Vagina (tissue), 2 donors: ENCODE measurements at regions of chr11 and their contacts with region 1.

Region 1: DNA sequence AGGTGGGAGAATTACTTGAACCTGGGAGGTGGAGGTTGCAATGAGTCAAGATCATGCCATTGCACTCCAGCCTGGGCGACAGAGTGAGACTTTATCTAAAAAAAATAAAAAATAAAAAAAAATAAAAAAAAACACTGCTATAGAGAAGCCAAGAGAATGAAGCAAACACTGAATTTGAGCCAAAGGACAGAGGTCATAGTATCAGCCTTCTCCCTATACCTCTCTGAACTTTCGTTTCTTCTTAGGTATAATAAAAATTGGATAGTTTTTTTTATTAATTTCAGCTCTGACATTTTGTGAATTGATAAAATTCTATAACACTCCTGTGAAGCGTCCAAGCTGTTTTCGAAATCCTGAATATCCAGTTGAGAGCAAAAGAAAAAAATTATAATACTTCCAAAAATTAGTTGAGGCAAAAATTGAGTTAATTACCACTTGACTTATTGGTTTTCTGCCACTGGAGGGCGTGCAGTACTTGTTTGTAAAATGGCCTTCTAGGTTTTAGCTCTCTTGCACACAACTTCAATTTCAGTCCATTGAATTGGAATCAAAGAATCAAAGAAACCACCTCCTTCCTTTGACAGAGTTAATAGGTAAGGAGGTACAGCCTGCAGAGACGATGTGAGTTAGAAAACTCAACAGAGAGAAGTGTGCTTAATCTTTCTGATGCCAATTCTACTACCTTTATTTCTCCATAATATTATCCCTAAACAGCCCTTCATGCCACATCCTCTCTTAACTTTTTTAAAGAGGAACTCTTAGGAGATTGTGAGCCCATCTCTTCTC is 143.2 kb downstream of the BBOX1 start:
- DNase-seq: no peak
- H3K4me3 ChIP-seq: no peak overlapping the region
- H3K27ac ChIP-seq: no peak overlapping the region
- H3K4me1 ChIP-seq: no peaks in the 10 kb centered on the region
- H3K27me3 ChIP-seq: no peaks in the 10 kb centered on the region
- CTCF ChIP-seq: peak; percentile 69 to 93 (median 74)
- POLR2A ChIP-seq: no peak

Region 2: DNA sequence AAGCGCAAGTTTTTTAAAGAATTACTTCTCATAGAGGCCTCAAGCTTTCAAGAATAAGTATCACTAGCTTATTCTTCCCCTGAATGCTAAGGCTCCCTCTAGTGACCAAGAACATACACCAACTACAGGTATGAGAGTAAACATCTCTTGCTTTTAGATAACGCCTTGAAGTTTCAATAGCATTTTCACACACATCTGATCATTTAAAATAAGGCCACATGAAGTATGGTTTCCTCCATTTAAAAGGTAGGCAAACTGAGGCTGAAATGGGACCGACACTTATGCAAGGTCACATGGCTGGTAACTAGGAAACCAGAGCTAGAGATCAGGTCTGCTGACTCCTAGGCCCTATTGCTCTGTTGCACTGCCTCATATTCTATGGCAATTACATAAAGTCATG is 112.6 kb after region 1 on chr11:
- intact Hi-C with region 1: loop called (anchors 5 kb)
- DNase-seq: no peak
- H3K4me3 ChIP-seq: no peak overlapping the region
- H3K27ac ChIP-seq: no peak overlapping the region
- H3K4me1 ChIP-seq: no peaks in the 10 kb centered on the region
- H3K27me3 ChIP-seq: no peaks in the 10 kb centered on the region
- CTCF ChIP-seq: peak; percentile 2 to 27 (median 18)
- POLR2A ChIP-seq: no peak

Region 3: GRCh38 chr11:27497284-27497866 is 313.5 kb after region 1 on chr11:
- intact Hi-C with region 1: loop called (anchors 5 kb)
- DNase-seq: no peak
- H3K4me3 ChIP-seq: no peak overlapping the region
- H3K27ac ChIP-seq: no peak overlapping the region
- H3K4me1 ChIP-seq: peaks cover 15% of the 10 kb centered on the region
- H3K27me3 ChIP-seq: no peaks in the 10 kb centered on the region
- CTCF ChIP-seq: peak in 2 of 3 experiments; percentile 14 to 24
- POLR2A ChIP-seq: no peak